ENCODE measurements at regions of chr10 and their contacts with region 1.

Region 1: GRCh38 chr10:102420810-102421644 is at the start of gene FBXL15:
- DNase-seq: peak; percentile 86 to 96 (median 91)
- H3K4me3 ChIP-seq: peak within 1 kb of the TSS; percentile 95
- H3K4me3 Mint-ChIP-seq: peak within 1 kb of the TSS; percentile 92 to 99 (median 99)
- H3K27ac ChIP-seq: peak within 1 kb of the TSS; percentile 74
- H3K27ac Mint-ChIP-seq: peak within 1 kb of the TSS; percentile 89 to 98 (median 96)
- H3K4me1 ChIP-seq: peaks cover 35% of the 10 kb centered on the region
- H3K4me1 Mint-ChIP-seq: peaks cover 20 to 53% (median 32%) of the 10 kb centered on the region in 3 donors
- H3K27me3 ChIP-seq: peaks cover 2% of the 10 kb centered on the region
- H3K27me3 Mint-ChIP-seq: peaks cover 17% of the 10 kb centered on the region in 2 donors
- total RNA-seq, gene FBXL15: 13.5 to 16.3 TPM

Region 2: GRCh38 chr10:102220612-102221011 is 200.4 kb before region 1 on chr10:
- CTCF ChIA-PET with region 1: no interaction called
- POLR2A ChIA-PET with region 1: no interaction called
- DNase-seq: no peak
- H3K4me3 ChIP-seq: no peak overlapping the region
- H3K4me3 Mint-ChIP-seq: no peak overlapping the region
- H3K27ac ChIP-seq: no peak overlapping the region
- H3K27ac Mint-ChIP-seq: no peak overlapping the region
- H3K4me1 ChIP-seq: no peaks in the 10 kb centered on the region
- H3K4me1 Mint-ChIP-seq: peaks cover 0 to 1% (median 0%) of the 10 kb centered on the region in 3 donors
- H3K27me3 ChIP-seq: peaks cover 3% of the 10 kb centered on the region
- H3K27me3 Mint-ChIP-seq: peaks cover 4 to 15% of the 10 kb centered on the region in 2 donors

Region 3: GRCh38 chr10:102358712-102359382 is 62.2 kb before region 1 on chr10:
- CTCF ChIA-PET with region 1: no interaction called
- POLR2A ChIA-PET with region 1: no interaction called
- DNase-seq: no peak
- H3K4me3 ChIP-seq: no peak overlapping the region
- H3K4me3 Mint-ChIP-seq: no peak overlapping the region
- H3K27ac ChIP-seq: no peak overlapping the region
- H3K27ac Mint-ChIP-seq: no peak overlapping the region
- H3K4me1 ChIP-seq: no peaks in the 10 kb centered on the region
- H3K4me1 Mint-ChIP-seq: peaks cover 0 to 2% (median 0%) of the 10 kb centered on the region in 3 donors
- H3K27me3 ChIP-seq: no peaks in the 10 kb centered on the region
- H3K27me3 Mint-ChIP-seq: no peaks in the 10 kb centered on the region

Region 4: GRCh38 chr10:102408728-102409603 is 12.1 kb before region 1 on chr10:
- CTCF ChIA-PET with region 1: interaction called, 6 read pairs
- POLR2A ChIA-PET with region 1: interaction called, 11 read pairs
- DNase-seq: peak; percentile 40 to 78 (median 53)
- H3K4me3 ChIP-seq: peak overlapping the region; percentile 64
- H3K4me3 Mint-ChIP-seq: peak overlapping the region; percentile 76 to 80 (median 79)
- H3K27ac ChIP-seq: no peak overlapping the region
- H3K27ac Mint-ChIP-seq: peak overlapping the region in 4 of 8 donors; percentile 12 to 78 (median 52)
- H3K4me1 ChIP-seq: peaks cover 21% of the 10 kb centered on the region
- H3K4me1 Mint-ChIP-seq: peaks cover 16 to 33% (median 27%) of the 10 kb centered on the region in 3 donors
- H3K27me3 ChIP-seq: peaks cover 37% of the 10 kb centered on the region
- H3K27me3 Mint-ChIP-seq: peaks cover 26 to 43% of the 10 kb centered on the region in 2 donors

Region 5: DNA sequence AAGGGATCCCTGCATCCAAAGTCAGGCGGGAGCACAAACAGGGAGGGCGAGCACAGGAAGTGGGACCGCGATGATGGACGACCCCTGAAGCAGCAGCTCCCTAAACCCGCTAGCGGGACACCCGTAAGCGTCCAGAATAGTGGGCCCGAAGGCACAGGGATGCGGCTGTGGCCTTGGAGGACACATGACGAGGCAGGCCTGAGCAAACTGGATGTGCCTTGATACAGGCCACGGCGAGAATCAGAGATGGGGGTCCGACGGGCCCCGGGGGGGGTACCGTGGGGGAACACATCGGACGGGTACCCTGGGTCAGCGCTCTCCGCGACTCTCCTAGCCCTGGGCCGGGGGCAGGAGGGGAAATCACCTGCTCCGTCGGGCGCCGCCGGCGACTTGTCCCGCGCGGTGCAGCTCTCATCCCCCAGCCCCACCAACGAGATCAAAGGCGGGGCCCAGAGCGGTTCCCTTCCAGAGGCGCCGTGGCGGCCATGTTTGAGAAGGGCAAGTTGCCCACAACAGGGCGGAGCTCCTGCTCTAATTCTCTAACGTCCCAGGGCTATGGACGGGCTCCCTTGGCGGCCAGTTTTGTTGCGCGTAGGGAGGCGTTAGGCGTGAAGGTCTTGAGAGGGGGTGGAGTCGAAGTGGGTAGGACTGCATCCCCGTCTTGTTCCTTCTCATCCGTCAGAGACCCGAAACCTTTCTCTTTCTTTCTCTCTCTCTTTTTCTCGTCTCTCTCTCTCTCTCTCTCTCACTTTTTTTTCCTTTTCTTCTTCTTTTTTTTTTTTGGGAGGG is 11.3 kb after region 1 on chr10 and contains the start of gene CUEDC2:
- CTCF ChIA-PET with region 1: interaction called, 16 read pairs
- POLR2A ChIA-PET with region 1: interaction called, 45 read pairs
- DNase-seq: peak; percentile 87 to 94 (median 90)
- H3K4me3 ChIP-seq: peak within 1 kb of the TSS; percentile 75
- H3K4me3 Mint-ChIP-seq: peak within 1 kb of the TSS; percentile 89 to 97 (median 93)
- H3K27ac ChIP-seq: peak within 1 kb of the TSS; percentile 70
- H3K27ac Mint-ChIP-seq: peak within 1 kb of the TSS; percentile 84 to 98 (median 88)
- H3K4me1 ChIP-seq: peaks cover 48% of the 10 kb centered on the region
- H3K4me1 Mint-ChIP-seq: peaks cover 31 to 51% (median 42%) of the 10 kb centered on the region in 3 donors
- H3K27me3 ChIP-seq: no peaks in the 10 kb centered on the region
- H3K27me3 Mint-ChIP-seq: peaks cover 0 to 10% of the 10 kb centered on the region in 2 donors
- total RNA-seq, gene CUEDC2: 62.4 to 64.8 TPM

Region 6: DNA sequence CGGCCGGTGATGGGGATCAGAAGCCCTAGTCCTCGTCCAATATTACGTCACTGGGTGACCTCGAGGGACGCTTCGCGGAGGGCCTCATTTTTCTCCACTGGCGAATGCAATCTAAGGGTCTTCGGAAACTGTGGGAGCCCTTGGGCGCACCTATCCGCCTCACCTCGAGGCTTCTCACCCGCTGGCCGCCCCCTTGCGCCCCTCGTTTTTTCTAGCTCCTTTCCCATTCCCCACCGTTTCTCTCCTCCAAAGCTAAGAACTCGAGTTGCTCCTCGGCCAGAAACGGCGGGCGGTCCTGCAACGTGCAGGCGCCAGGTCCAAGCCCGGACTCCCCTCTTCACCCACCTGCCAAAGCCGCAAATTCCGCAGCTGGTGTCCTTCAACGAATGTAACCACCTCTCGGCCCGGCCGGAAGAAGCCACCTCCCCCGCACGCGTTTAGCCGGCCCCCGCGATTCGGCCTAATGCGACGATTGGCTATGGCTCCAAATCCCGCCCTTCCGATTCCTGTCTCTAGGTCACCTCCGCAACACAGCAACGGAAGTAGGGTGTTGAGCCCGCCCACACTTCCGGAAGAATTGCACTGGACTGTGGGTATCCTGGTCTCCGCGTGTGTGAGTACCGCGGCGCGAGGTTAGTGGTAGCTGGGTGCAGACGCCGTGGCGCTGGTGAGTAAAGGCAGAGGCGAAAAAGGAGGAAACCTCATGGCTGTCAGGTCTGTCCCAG is 975.2 kb after region 1 on chr10 and contains the starts of genes ATP5MK and PDCD11:
- CTCF ChIA-PET with region 1: no interaction called
- POLR2A ChIA-PET with region 1: no interaction called
- DNase-seq: peak; percentile 89 to 96 (median 92)
- H3K4me3 ChIP-seq: peak within 1 kb of the TSS; percentile 96
- H3K4me3 Mint-ChIP-seq: peak within 1 kb of the TSS; percentile 92 to 99 (median 98)
- H3K27ac ChIP-seq: peak within 1 kb of the TSS; percentile 76
- H3K27ac Mint-ChIP-seq: peak within 1 kb of the TSS; percentile 72 to 97 (median 96)
- H3K4me1 ChIP-seq: peaks cover 43% of the 10 kb centered on the region
- H3K4me1 Mint-ChIP-seq: peaks cover 55 to 66% (median 65%) of the 10 kb centered on the region in 3 donors
- H3K27me3 ChIP-seq: no peaks in the 10 kb centered on the region
- H3K27me3 Mint-ChIP-seq: no peaks in the 10 kb centered on the region
- total RNA-seq, gene ATP5MK: 438 to 454 TPM
- total RNA-seq, gene PDCD11: 88.5 to 91.3 TPM

Measured in CD8-positive, alpha-beta memory T cell (primary cell).